ENCODE measurements at regions of chr4 and their contacts with region 1.

Region 1: GRCh38 chr4:74133786-74134499 is 24.0 kb upstream of the MTHFD2L start:
- DNase-seq: peak; percentile 72
- ATAC-seq: no peak
- H3K4me3 Mint-ChIP-seq: no peak overlapping the region
- H3K27ac Mint-ChIP-seq: no peak overlapping the region
- H3K4me1 Mint-ChIP-seq: no peaks in the 10 kb centered on the region
- H3K27me3 Mint-ChIP-seq: peaks cover 5% of the 10 kb centered on the region
- CTCF ChIP-seq: peak; percentile 52

Region 2: DNA sequence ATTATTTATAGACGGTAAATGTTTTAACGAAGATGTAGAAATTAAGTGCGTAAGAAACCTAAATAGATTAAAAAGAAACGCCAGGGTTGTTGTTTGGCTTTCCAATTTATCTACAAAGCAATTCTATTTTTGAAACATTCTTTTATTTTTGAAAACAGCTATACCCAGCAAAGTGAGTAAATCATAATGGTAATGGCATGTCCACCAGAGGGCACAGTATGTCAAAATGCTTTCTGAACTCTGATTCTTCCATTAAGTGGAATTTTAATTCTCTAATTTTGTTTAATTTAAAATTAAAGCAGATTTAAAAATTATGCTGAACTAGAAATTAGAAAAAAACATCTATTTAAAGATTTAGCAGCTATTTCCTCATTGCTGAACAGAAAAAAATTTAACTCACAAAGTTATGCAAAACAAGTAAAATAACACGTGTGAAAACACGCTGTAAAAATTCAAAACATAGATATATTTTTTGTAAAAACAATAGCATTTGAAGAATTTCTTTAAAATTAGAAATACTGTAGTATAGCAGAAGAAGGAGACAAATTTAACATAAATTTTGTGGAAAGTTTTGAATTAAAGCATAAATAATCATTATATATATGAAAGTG is 540.2 kb before region 1 on chr4:
- CTCF ChIA-PET with region 1: interaction called, 14 read pairs
- POLR2A ChIA-PET with region 1: no interaction called
- intact Hi-C with region 1: no loop called
- DNase-seq: peak; percentile 8
- ATAC-seq: no peak
- H3K4me3 Mint-ChIP-seq: no peak overlapping the region
- H3K27ac Mint-ChIP-seq: no peak overlapping the region
- H3K4me1 Mint-ChIP-seq: no peaks in the 10 kb centered on the region
- H3K27me3 Mint-ChIP-seq: peaks cover 1% of the 10 kb centered on the region
- CTCF ChIP-seq: peak; percentile 48

Region 3: DNA sequence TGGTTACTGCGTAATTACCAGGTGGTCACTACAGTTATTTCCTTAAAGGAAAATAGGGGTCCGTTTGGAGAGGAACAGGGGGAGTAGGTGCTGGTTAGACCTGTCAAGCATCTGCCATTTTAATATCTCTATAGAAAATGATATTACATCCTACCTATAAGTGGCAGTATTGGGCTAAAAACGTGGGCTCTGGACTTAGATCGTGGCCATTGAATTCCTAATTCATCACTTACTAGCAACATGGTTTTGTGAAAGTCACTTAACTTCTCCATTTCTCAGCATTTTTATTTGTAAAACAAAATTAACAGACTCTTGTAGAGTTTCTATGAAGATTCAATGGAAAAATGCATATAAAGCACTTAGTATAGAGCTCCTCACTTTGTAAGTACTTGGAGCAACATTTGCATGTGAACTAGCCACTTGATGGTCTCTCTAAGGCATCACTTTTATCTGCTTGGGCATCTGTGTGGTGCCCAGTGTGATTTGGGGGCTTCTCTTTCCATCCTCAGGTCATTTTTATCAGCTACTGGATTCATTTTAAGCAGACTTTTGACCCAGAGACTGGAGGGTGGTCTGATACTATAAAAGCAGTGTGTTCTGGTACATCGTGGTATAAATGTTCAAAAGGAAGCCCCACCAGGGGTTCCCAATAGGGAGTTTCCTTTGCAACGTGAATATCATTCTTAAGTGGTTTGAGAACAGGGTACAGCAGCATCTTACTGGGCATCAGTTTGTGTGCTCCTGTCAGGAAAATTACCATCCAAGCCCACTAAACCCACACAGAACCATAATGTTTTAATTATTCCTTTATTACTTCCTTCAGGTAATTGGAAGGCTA is 471.0 kb before region 1 on chr4:
- CTCF ChIA-PET with region 1: interaction called, 20 read pairs
- POLR2A ChIA-PET with region 1: no interaction called
- intact Hi-C with region 1: loop called (anchors 5 kb)
- DNase-seq: no peak
- ATAC-seq: no peak
- H3K4me3 Mint-ChIP-seq: no peak overlapping the region
- H3K27ac Mint-ChIP-seq: no peak overlapping the region
- H3K4me1 Mint-ChIP-seq: peaks cover 3% of the 10 kb centered on the region
- H3K27me3 Mint-ChIP-seq: peaks cover 4% of the 10 kb centered on the region
- CTCF ChIP-seq: peak; percentile 38

Region 4: GRCh38 chr4:73729534-73730165 is 404.3 kb before region 1 on chr4:
- CTCF ChIA-PET with region 1: interaction called, 5 read pairs
- POLR2A ChIA-PET with region 1: no interaction called
- intact Hi-C with region 1: loop called (anchors 10 kb)
- DNase-seq: peak; percentile 30
- ATAC-seq: no peak
- H3K4me3 Mint-ChIP-seq: no peak overlapping the region
- H3K27ac Mint-ChIP-seq: no peak overlapping the region
- H3K4me1 Mint-ChIP-seq: no peaks in the 10 kb centered on the region
- H3K27me3 Mint-ChIP-seq: no peaks in the 10 kb centered on the region
- CTCF ChIP-seq: peak; percentile 8

Region 5: GRCh38 chr4:74152836-74153235 is 18.9 kb after region 1 on chr4:
- CTCF ChIA-PET with region 1: interaction called, 14 read pairs
- POLR2A ChIA-PET with region 1: no interaction called
- intact Hi-C with region 1: no loop called
- DNase-seq: no peak
- ATAC-seq: no peak
- H3K4me3 Mint-ChIP-seq: no peak overlapping the region
- H3K27ac Mint-ChIP-seq: no peak overlapping the region
- H3K4me1 Mint-ChIP-seq: peaks cover 7% of the 10 kb centered on the region
- H3K27me3 Mint-ChIP-seq: peaks cover 17% of the 10 kb centered on the region
- CTCF ChIP-seq: no peak

Measured in activated CD8-positive, alpha-beta T cell treated with anti-CD3 and anti-CD28 coated beads for 36 hours (primary cell).